ENCODE measurements at regions of chr4 and their contacts with region 1.

Region 1: DNA sequence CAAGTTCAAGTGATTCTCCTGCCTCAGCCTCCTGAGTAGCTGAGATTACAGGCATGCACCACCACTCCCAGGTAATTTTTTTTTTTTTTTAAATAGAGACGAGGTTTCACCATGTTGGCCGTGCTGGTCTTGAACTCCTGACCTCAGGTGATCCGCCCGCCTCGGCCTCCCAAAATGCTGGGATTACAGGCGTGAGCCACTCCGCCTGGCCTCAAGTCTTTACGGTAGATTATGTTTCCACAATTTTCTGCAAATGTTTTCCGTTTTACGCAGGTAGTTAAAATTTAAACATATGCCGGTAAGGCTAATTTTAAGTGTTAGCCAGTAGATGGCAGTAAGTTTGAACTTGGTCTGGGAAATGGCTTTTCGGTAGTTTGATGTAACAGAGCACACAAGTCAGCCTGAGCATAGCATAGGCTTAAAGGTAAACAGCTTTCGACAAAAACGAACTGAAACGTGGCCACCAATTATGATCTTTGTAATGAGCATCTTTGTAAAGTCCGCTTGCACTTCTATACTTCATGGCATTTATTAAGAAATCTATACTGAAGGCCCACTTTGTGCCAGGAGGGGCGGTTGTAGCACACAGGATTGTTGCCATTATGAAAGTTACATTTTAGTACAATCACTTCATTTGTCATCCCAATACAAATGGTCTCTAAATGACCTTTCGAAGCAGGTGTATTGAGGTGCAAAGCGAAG is 31.1 kb downstream of the CCKAR start:
- DNase-seq: peak; percentile 52
- H3K4me3 ChIP-seq: no peak overlapping the region
- CTCF ChIP-seq: peak; percentile 34

Region 2: DNA sequence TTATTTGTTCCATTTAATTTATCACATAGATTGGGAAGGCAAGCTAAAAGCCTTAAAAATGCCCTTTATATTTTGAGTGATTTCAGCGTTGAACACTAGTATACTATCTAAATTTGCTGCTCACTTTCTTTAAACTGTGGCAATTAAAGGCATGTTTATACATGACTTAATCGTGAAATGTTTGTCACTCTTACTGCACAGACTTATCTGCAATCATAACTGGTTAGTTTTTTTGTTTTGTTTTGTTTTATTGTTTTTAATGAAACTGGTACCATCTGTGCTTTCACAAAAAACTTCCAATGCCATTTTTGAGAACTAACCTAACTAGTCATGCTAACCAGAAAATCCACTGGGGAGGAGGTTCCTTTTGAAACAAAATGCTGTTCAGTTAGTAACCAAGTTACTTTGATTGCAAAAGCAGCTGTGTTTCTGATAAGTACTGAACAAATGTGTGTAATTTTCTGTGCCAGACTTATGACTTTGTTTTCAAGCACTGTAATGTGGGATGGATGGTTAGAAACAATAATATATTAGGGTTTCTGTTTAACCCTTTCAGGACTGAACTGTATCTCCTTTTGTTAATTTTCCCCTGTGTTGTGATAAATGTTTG is 25.1 kb before region 1 on chr4:
- CTCF ChIA-PET with region 1: interaction called, 11 read pairs
- POLR2A ChIA-PET with region 1: no interaction called
- DNase-seq: no peak
- H3K4me3 ChIP-seq: no peak overlapping the region
- CTCF ChIP-seq: no peak

Region 3: DNA sequence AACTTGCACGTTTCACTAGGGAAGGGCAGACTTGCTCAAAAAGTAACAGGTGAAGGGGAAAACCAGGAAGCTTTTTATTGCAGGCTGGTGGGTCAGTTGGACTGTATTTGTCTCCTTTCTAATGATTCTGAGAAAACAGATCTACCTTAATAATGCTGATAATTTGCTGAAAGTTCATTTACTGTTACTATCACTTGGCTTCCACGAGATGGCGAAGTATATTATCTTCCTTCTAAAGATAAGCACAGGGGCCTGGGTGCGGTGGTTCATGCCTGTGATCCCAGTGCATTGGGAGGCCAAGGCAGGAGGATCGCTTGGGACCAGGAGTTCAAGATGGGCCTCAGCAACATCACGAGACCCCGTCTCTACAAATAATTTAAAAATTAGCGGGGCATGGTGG is 14.7 kb after region 1 on chr4:
- CTCF ChIA-PET with region 1: interaction called, 29 read pairs
- POLR2A ChIA-PET with region 1: no interaction called
- DNase-seq: no peak
- H3K4me3 ChIP-seq: no peak overlapping the region
- CTCF ChIP-seq: no peak

Region 4: GRCh38 chr4:26484032-26484515 is 24.9 kb after region 1 on chr4:
- CTCF ChIA-PET with region 1: interaction called, 19 read pairs
- POLR2A ChIA-PET with region 1: interaction called, 3 read pairs
- DNase-seq: peak; percentile 37
- H3K4me3 ChIP-seq: no peak overlapping the region
- CTCF ChIP-seq: no peak

Region 5: GRCh38 chr4:26583865-26584652 is 124.9 kb after region 1 on chr4 and contains the start of gene TBC1D19:
- CTCF ChIA-PET with region 1: interaction called, 14 read pairs
- POLR2A ChIA-PET with region 1: no interaction called
- DNase-seq: peak; percentile 40
- H3K4me3 ChIP-seq: peak within 1 kb of the TSS; percentile 83
- CTCF ChIP-seq: no peak

Region 6: DNA sequence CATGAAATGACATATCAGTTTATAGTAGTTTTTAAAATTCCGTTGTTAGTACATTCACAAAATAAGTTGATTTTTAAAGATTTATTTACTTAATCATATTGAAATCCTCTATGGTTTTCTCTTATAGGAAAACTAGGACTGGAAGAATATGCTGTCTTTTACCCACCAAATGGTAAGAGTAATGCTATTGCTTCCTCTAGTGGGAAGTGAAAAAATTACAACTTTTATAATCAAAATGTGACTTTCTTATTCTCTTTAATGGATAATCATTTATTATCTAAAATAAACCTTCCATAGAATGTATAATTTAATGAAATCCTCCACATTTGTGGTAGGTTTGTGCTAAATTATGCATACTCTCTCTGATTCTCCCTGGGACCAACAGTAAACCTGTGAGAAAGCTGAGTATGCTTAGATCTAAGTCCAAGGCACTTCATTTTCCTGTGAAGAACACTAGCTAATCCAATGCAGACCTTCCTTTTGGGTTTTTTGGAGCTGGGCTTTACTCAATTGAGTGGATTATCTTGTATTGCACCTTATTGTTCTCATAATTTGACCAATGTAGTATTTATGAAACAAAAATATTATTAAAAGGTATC is 260.8 kb after region 1 on chr4:
- CTCF ChIA-PET with region 1: interaction called, 147 read pairs
- POLR2A ChIA-PET with region 1: no interaction called
- DNase-seq: no peak
- H3K4me3 ChIP-seq: no peak overlapping the region
- CTCF ChIP-seq: peak; percentile 43